Activated CD4-positive, alpha-beta T cell treated with anti-CD3 and anti-CD28 coated beads for 36 hours (primary cell): ENCODE measurements at regions of chr9 and their contacts with region 1.

Region 1: GRCh38 chr9:122810306-122810946 is 10.5 kb downstream of the OR1K1 start:
- DNase-seq: peak; percentile 86
- ATAC-seq: peak; percentile 45
- H3K4me3 Mint-ChIP-seq: no peak overlapping the region
- H3K27ac Mint-ChIP-seq: no peak overlapping the region
- H3K4me1 Mint-ChIP-seq: peaks cover 29% of the 10 kb centered on the region
- H3K27me3 Mint-ChIP-seq: no peaks in the 10 kb centered on the region

Region 2: DNA sequence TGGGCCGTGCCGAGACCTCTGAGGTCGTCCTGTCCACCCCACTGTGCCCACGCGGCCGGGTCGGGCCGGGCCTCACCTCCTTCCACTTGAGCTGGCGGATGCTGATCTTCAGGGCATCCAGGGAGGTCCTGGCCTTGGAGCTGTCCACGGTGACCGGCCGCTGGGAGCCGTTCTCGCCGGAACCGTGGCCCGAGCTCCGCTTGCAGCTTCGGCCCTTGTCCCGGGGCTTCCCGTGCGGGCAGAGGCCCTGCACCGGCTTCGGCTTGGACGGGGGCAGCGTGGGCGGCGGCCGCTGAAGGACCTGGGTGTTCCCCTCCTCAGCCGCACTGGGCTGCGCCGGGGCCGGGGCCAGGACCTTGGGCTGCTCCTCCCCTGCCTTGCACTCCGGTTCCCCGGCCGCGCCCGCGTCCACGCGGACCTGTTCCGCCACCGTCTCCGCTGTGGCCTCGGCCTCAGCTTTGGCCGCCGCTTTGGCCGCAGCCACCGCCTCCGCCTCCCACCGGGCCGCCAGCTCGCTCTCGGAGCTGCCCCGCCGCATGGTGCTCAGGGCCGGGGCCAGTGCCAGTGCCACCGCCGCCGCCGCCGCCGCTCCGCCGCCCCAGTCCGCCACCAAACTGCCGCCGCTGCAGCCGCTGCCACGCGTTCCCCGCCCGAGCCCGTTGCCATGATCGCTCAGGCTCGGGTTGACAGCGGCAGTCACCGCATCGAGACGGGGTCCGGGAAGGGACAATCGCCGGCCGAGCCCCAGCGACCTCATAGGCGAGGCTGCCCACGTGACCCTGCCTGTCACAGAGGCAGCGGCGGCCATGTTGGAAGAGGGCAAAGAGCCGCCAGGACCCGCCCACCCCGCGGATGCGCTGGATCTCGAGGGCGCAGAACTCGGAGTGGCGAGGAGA is 717.6 kb before region 1 on chr9 and contains the start of gene TTLL11:
- CTCF ChIA-PET with region 1: interaction called, 13 read pairs
- POLR2A ChIA-PET with region 1: no interaction called
- intact Hi-C with region 1: loop called (anchors 1 to 2 kb)
- DNase-seq: peak; percentile 99
- ATAC-seq: peak; percentile 95
- H3K4me3 Mint-ChIP-seq: peak within 1 kb of the TSS; percentile 78
- H3K27ac Mint-ChIP-seq: peak within 1 kb of the TSS; percentile 8
- H3K4me1 Mint-ChIP-seq: peaks cover 29% of the 10 kb centered on the region
- H3K27me3 Mint-ChIP-seq: peaks cover 5% of the 10 kb centered on the region
- total RNA-seq, gene TTLL11: 1.3 to 1.8 TPM

Region 3: GRCh38 chr9:122264360-122265148 is 545.9 kb before region 1 on chr9 and contains the starts of genes MRRF and RBM18:
- CTCF ChIA-PET with region 1: interaction called, 5 read pairs
- POLR2A ChIA-PET with region 1: no interaction called
- intact Hi-C with region 1: loop called in 1 of 2 experiments (anchors 1 kb)
- DNase-seq: peak; percentile 93
- ATAC-seq: peak; percentile 83
- H3K4me3 Mint-ChIP-seq: peak within 1 kb of the TSS; percentile 98
- H3K27ac Mint-ChIP-seq: peak within 1 kb of the TSS; percentile 99
- H3K4me1 Mint-ChIP-seq: peaks cover 44% of the 10 kb centered on the region
- H3K27me3 Mint-ChIP-seq: no peaks in the 10 kb centered on the region
- total RNA-seq, gene MRRF: 57.3 to 61.5 TPM
- total RNA-seq, gene RBM18: 22.3 to 28.6 TPM

Region 4: DNA sequence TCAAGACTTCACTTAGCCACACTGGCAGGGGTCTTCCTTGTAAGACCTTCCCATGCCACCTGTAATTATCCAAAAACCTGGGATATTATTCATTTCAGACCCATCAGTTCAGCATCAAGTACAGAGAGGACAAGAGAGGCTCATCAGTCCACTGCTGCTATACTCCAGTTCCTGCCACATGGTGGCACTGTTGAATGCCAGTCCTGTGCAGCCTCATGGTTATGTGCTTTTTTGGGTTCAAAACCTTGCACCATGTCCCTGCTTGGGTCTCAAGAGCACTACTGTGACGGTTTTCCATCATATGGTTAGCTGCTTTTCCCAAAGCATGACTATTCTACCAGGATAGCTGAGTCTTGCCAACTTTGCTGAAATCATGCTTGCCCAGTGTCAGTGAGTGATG is 431.1 kb before region 1 on chr9:
- CTCF ChIA-PET with region 1: no interaction called
- POLR2A ChIA-PET with region 1: no interaction called
- intact Hi-C with region 1: loop called (anchors 2 to 10 kb)
- DNase-seq: peak; percentile 53
- ATAC-seq: no peak
- H3K4me3 Mint-ChIP-seq: no peak overlapping the region
- H3K27ac Mint-ChIP-seq: no peak overlapping the region
- H3K4me1 Mint-ChIP-seq: no peaks in the 10 kb centered on the region
- H3K27me3 Mint-ChIP-seq: peaks cover 10% of the 10 kb centered on the region

Region 5: DNA sequence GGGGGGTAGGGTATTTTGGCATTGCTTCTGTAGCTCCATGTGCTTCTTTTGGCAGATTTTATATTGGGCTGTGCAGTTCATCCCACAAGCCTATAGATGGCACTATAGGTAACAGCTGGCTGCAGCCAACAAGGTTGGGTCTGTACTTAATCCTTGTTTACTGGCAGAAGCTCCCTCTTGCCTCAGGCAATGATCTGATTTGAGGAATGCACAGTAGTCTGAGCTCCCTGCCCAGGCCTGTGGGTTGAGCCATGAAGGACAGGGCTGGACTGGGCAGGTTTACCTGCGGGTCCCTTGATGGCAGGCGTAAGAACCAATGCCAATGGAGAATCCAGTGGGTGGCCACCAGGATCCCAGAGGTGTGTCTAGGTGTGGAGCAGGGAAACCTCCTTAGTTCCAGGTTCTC is 311.5 kb before region 1 on chr9:
- CTCF ChIA-PET with region 1: interaction called, 13 read pairs
- POLR2A ChIA-PET with region 1: no interaction called
- intact Hi-C with region 1: loop called in 1 of 2 experiments (anchors 1 kb)
- DNase-seq: peak; percentile 34
- ATAC-seq: peak; percentile 61
- H3K4me3 Mint-ChIP-seq: no peak overlapping the region
- H3K27ac Mint-ChIP-seq: no peak overlapping the region
- H3K4me1 Mint-ChIP-seq: no peaks in the 10 kb centered on the region
- H3K27me3 Mint-ChIP-seq: peaks cover 47% of the 10 kb centered on the region

Region 6: GRCh38 chr9:122518226-122518625 is 292.2 kb before region 1 on chr9:
- CTCF ChIA-PET with region 1: no interaction called
- POLR2A ChIA-PET with region 1: no interaction called
- intact Hi-C with region 1: no loop called
- DNase-seq: no peak
- ATAC-seq: no peak
- H3K4me3 Mint-ChIP-seq: no peak overlapping the region
- H3K27ac Mint-ChIP-seq: no peak overlapping the region
- H3K4me1 Mint-ChIP-seq: no peaks in the 10 kb centered on the region
- H3K27me3 Mint-ChIP-seq: peaks cover 12% of the 10 kb centered on the region

Region 7: DNA sequence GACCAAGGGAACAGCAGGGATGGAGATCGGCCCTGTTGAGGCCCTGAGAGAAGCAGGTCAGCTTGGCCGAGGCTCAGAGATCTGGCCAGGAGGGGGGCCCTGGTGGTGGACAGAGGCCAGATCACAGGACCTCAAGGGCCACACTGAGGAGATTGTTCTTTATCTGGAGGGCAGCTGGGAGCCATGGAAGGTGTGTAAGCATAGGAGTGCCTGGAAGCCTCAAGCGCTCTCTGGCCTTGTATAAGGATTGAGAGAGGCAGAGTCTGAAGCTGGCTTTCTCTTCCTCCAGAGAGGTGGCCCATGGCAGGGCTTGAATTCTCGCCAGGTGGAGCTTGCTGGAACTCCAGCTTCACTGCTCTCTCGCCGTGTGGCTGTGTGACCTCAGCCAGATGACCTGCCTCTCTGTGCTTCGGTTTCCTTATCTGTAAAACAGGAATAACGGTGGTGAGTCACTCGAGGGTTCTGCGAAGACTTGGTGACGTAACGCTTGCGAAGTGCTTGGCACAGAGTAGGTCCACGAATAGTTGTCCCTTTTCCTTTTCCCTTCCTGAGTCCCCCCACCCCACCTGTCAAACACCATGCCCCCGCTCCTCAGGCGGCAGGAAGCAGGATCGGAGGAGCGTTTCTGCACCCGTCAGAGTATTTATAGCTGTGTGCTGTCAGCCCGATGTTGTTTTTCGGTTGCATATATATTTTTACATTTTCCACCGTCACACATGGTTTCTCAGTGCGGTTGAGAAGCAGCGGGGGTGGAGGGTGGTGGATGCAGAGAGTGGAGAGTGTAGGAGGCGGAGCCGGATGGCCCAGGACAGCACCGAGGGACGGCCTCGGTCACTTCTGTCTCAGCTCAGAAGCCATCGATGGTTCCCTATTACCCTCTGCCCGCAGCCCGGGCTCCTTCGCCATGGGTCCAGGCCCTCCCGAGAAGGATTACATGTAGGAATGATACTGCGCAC is 528.6 kb after region 1 on chr9:
- CTCF ChIA-PET with region 1: no interaction called
- POLR2A ChIA-PET with region 1: no interaction called
- intact Hi-C with region 1: loop called in 1 of 2 experiments (anchors 1 kb)
- DNase-seq: peak; percentile 87
- ATAC-seq: peak; percentile 75
- H3K4me3 Mint-ChIP-seq: peak overlapping the region; percentile 62
- H3K27ac Mint-ChIP-seq: peak overlapping the region; percentile 99
- H3K4me1 Mint-ChIP-seq: peaks cover 35% of the 10 kb centered on the region
- H3K27me3 Mint-ChIP-seq: no peaks in the 10 kb centered on the region